ENCODE measurements at regions of chr15 and their contacts with region 1.

Region 1: DNA sequence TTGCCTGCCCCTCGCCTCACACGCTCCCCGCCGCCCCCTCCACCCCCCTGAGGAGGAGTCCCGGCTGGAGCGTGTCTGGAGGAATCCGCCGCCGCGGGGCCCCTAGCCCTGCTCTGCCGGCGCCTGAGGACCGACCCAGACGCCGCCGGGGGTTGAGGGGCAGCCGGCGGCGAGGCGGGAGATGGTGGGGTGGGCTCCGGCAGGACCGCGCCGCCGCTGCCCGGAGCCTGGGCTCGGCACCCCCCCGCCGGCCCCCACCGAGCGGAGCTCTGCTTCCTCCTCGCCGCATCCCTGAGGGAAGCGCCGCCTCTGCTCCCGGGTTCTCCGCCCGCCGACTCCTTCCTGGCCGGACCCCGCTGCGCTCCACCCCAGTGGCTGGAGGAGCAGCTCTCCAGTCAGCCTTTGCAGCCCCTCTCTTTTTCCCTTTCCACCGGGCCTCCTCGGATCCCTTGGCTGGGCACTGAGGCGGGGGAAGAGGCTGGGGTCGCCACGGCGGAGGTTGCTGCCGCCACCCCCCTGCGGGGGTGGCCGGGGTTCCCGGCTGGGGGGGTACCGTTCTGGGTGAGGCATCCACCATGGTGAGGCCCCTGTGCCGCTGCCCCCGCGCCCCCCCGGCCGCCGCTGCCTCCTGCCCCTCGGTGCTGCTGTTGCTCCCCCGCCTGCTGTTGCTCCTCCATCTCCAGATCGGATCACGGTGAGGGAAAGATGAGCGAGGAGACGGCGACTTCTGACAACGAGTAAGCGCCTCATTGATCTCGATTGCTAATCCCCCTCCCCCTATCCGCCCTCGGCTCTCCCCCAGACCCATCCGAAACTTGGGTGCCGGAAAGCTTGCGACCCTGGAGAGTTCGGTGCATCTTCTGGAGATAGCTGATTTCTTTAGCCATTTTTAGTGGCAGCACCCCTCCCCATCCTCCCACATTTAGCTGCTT is at the start of gene SPRED1:
- DNase-seq: peak; percentile 81 to 84
- ATAC-seq: peak; percentile 61 to 87 (median 76)
- H3K4me3 ChIP-seq: peak within 1 kb of the TSS; percentile 73 to 95 (median 90)
- H3K27ac ChIP-seq: peak within 1 kb of the TSS; percentile 94 to 100 (median 99)
- H3K4me1 ChIP-seq: peaks cover 0 to 45% (median 38%) of the 10 kb centered on the region in 9 donors
- H3K27me3 ChIP-seq: peaks cover 0 to 3% (median 0%) of the 10 kb centered on the region in 7 donors
- CTCF ChIP-seq: no peak
- total RNA-seq, gene SPRED1: 6.4 to 20.2 (median 7.6) TPM

Region 2: DNA sequence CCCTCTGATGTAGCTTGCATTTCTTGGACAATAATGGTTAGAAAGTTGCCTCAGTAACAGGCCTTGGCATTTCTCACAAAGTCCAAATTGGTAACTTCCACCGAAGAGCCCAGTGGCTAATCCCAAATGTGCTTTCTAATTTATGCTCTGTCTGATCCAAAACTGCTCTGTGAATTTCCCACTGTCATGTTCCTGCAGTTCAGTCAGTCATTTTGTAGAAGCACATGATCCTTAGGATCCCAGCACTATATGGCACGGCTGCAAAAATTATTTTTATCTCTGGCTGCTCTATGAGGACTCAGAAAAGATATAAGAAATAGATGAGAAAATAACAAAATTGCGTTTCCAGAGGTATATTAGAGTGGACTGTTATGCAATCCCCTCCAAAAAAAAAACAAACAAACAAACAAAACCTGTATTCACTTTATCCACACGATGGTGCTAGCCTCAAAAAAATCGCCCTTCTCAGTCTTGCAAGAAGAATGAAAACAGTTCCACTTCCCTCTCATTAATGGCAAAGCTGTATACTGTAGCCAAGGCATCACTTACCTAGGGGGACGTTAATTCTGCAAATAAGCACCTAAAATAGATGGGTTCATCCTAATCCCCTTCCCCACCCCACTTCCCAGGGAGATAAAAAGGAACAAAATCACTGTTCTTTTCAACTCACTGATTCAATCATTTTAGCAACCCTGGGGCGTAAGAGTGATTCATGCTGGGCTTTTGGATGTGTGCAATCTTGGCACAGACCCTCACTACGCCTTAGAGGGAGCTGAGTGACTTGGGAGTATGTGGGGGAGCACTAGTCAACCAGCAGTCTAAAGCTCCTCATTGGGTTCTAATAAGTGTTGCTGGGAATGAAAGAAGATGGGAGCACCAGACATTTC is 257.0 kb before region 1 on chr15:
- intact Hi-C with region 1: loop called in 4 of 10 experiments (anchors 5 to 10 kb)
- DNase-seq: peak in 1 of 2 donors; percentile 39
- ATAC-seq: peak; percentile 74 to 88 (median 81)
- H3K4me3 ChIP-seq: no peak overlapping the region
- H3K27ac ChIP-seq: no peak overlapping the region
- H3K4me1 ChIP-seq: peaks cover 0 to 2% (median 0%) of the 10 kb centered on the region in 9 donors
- H3K27me3 ChIP-seq: peaks cover 0 to 4% (median 0%) of the 10 kb centered on the region in 7 donors
- CTCF ChIP-seq: peak; percentile 51 to 80 (median 70)

Region 3: DNA sequence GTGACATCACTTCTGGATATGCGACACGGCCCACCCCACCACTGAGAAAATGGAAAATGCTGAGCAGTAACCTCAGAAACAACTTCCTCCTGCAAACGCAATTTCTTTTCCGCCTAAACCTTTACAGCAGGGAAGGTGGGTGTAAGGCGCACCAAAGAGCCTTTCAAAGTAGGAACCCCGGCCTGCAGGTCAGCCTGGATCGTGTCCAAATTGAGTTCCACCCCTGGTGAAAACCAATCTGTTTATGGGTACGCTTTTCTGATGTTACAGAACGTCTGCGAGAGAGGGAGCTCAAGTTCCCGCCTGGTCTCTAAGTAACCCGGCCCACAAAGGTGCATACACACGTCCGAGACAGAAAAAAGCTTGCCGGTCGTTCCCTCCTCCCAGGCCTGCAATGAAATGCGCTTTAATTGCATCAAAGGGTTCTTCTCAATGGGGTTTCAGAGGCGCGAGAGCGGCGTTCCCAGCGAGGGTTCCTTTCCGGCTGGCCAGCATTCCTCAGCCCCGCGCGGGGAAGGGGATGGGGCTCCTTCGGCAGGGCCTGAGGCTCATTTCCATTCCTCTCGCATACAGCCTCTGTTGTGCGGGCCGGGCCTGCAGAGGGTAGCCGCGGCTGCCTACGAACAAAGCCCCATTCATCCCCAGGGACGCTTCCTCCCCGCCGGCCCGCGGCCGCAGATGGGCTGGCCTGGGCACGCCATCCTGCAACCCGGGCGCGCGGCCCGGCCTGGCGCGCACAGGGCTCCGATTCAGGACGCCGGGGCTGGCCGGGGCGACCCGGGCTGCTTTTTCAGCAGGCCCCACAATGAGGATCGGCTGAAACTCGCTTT is 180.2 kb before region 1 on chr15:
- intact Hi-C with region 1: loop called in 7 of 10 experiments (anchors 2 to 5 kb)
- DNase-seq: peak; percentile 65 to 79
- ATAC-seq: peak; percentile 86 to 97 (median 89)
- H3K4me3 ChIP-seq: peak overlapping the region; percentile 37 to 73 (median 63)
- H3K27ac ChIP-seq: peak overlapping the region; percentile 83 to 96 (median 90)
- H3K4me1 ChIP-seq: peaks cover 8 to 54% (median 39%) of the 10 kb centered on the region in 9 donors
- H3K27me3 ChIP-seq: peaks cover 0 to 3% (median 0%) of the 10 kb centered on the region in 7 donors
- CTCF ChIP-seq: peak in 4 of 9 donors; percentile 22 to 49 (median 33)

Region 4: DNA sequence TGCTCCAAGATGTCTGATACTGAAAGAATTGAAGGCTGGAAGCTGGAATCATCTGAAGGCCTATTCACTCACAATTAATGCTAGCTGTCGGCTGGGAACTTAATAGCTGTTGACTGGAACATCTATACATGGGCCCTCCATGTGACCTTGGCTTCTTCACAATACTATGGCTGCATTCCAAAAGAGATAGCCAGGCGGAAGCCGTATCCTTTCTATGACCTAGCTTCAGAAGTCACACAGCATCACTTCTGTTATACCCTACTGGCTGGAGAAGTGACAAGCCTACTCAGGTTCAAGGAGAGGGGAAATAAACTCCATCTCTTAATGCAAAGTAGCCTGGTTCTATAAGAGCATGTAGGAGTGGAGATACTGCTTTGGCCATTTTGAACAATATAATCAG is 51.0 kb before region 1 on chr15:
- intact Hi-C with region 1: loop called in 2 of 10 experiments (anchors 5 kb)
- DNase-seq: no peak
- ATAC-seq: peak; percentile 46 to 85 (median 73)
- H3K4me3 ChIP-seq: no peak overlapping the region
- H3K27ac ChIP-seq: peak overlapping the region in 1 of 10 donors; percentile 40
- H3K4me1 ChIP-seq: peaks cover 0 to 33% (median 19%) of the 10 kb centered on the region in 9 donors
- H3K27me3 ChIP-seq: no peaks in the 10 kb centered on the region
- CTCF ChIP-seq: no peak

Region 5: GRCh38 chr15:38297623-38298388 is 45.1 kb after region 1 on chr15:
- intact Hi-C with region 1: loop called in 2 of 10 experiments (anchors 5 to 10 kb)
- DNase-seq: no peak
- ATAC-seq: no peak
- H3K4me3 ChIP-seq: no peak overlapping the region
- H3K27ac ChIP-seq: no peak overlapping the region
- H3K4me1 ChIP-seq: peaks cover 3 to 73% (median 36%) of the 10 kb centered on the region in 9 donors
- H3K27me3 ChIP-seq: no peaks in the 10 kb centered on the region
- CTCF ChIP-seq: no peak

Region 6: GRCh38 chr15:38354315-38354929 is 101.7 kb after region 1 on chr15:
- intact Hi-C with region 1: loop called in 5 of 10 experiments (anchors 5 to 10 kb)
- DNase-seq: peak in 1 of 2 donors; percentile 70
- ATAC-seq: peak in 7 of 8 donors; percentile 47 to 83 (median 70)
- H3K4me3 ChIP-seq: no peak overlapping the region
- H3K27ac ChIP-seq: no peak overlapping the region
- H3K4me1 ChIP-seq: peaks cover 0 to 5% (median 0%) of the 10 kb centered on the region in 9 donors
- H3K27me3 ChIP-seq: no peaks in the 10 kb centered on the region
- CTCF ChIP-seq: peak; percentile 73 to 90 (median 82)